Activated CD4-positive, alpha-beta T cell treated with anti-CD3 and anti-CD28 coated beads for 36 hours (primary cell): ENCODE measurements at regions of chr6 and their contacts with region 1.

Region 1: DNA sequence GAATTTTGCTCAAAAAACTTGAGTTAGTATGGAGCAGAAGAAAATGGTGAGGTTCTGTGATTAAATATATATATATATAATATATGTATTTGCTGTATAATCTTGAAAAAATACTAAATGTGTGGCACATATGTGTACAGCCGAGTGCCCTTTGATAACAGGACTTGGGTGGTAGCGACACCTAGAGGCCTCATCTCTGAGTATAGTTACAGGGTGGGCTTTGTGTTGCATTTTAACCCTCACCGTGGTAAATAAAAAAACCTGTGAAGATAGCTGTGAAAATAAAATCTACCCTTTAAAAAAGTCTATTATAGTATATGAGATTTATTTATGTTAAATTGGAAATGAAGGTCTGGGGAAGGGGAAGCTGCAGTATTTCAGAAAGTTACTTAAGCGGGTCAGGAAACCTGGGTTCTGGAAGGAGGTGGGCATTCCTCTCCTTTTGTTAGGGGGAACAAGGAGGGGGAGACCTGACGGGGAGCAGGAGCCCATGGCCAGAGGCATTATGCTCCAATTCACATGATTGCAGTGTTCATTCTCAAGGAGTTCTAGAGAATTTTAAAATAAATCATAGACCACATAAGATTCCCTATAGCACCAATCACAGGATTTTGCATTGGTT is 82.7 kb downstream of the SH3BGRL2 start:
- DNase-seq: peak; percentile 70
- ATAC-seq: peak; percentile 70
- H3K4me3 Mint-ChIP-seq: no peak overlapping the region
- H3K27ac Mint-ChIP-seq: no peak overlapping the region
- H3K4me1 Mint-ChIP-seq: no peaks in the 10 kb centered on the region
- H3K27me3 Mint-ChIP-seq: peaks cover 8% of the 10 kb centered on the region

Region 2: GRCh38 chr6:79421707-79422484 is 291.9 kb before region 1 on chr6:
- CTCF ChIA-PET with region 1: no interaction called
- POLR2A ChIA-PET with region 1: no interaction called
- intact Hi-C with region 1: no loop called
- DNase-seq: no peak
- ATAC-seq: peak; percentile 33
- H3K4me3 Mint-ChIP-seq: no peak overlapping the region
- H3K27ac Mint-ChIP-seq: no peak overlapping the region
- H3K4me1 Mint-ChIP-seq: no peaks in the 10 kb centered on the region
- H3K27me3 Mint-ChIP-seq: peaks cover 4% of the 10 kb centered on the region

Region 3: DNA sequence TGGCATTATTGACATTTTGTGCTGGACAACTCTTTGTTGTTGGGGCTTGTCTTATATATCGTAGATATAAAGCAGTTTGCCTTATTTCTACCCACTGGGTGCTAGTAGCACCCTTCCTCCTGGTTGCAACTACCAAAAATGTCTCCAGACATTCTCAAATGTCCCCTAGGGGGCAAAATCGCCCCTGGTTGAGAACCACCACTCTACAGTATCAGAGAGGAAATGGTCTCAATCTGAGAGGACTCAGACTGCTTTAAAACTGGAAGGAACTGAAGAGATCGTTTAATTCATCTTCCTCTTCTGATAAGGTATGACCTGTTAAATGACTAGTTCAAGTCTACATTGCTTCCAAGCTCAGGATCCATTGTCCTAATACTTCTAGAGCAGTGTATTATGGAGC is 67.8 kb before region 1 on chr6:
- CTCF ChIA-PET with region 1: no interaction called
- POLR2A ChIA-PET with region 1: interaction called, 3 read pairs
- intact Hi-C with region 1: loop called in 1 of 2 experiments (anchors 5 kb)
- DNase-seq: peak; percentile 28
- ATAC-seq: peak; percentile 33
- H3K4me3 Mint-ChIP-seq: no peak overlapping the region
- H3K27ac Mint-ChIP-seq: no peak overlapping the region
- H3K4me1 Mint-ChIP-seq: peaks cover 4% of the 10 kb centered on the region
- H3K27me3 Mint-ChIP-seq: peaks cover 8% of the 10 kb centered on the region

Region 4: GRCh38 chr6:79821859-79822258 is 108.0 kb after region 1 on chr6:
- CTCF ChIA-PET with region 1: no interaction called
- POLR2A ChIA-PET with region 1: no interaction called
- intact Hi-C with region 1: no loop called
- DNase-seq: no peak
- ATAC-seq: no peak
- H3K4me3 Mint-ChIP-seq: no peak overlapping the region
- H3K27ac Mint-ChIP-seq: no peak overlapping the region
- H3K4me1 Mint-ChIP-seq: no peaks in the 10 kb centered on the region
- H3K27me3 Mint-ChIP-seq: peaks cover 12% of the 10 kb centered on the region